CD8-positive, alpha-beta T cell (primary cell): ENCODE measurements at regions of chr4 and their contacts with region 1.

Region 1: DNA sequence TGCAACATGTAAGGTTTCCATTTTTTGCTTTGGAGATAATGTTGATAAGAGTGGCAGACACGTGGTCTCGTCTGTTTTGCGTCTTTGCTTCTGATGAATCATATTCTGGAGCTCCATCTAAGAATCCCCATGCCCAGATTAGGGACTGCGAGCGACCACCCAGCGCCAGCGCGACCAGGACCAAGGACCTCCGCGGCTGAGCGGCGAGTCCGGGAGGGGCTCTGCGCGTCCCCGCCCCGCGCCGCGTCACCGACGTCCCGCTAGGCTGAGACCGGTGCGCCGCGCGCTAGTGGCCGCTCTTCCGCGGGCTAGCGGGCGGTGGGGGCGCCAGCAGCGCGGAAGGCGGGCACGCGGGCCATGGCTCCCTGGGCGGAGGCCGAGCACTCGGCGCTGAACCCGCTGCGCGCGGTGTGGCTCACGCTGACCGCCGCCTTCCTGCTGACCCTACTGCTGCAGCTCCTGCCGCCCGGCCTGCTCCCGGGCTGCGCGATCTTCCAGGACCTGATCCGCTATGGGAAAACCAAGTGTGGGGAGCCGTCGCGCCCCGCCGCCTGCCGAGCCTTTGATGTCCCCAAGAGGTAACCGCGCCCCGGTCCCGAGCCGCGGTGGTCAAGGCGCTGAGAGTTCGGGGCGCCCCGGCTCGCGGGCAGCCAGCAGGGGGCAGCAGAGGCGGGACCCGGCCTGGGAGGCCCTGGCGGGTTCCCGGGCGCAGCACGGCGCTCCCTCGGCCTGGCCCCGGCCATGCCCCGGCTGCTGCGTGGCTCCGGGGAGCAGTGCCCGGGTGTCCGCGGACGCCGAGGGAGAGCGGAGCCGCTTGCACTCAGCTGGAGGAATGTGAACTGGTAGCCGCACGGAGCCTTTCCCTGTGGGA is at the start of gene SRD5A3:
- DNase-seq: peak; percentile 57 to 89 (median 81)
- ATAC-seq: peak; percentile 85
- H3K4me3 ChIP-seq: peak within 1 kb of the TSS; percentile 68 to 88
- H3K4me3 Mint-ChIP-seq: peak within 1 kb of the TSS; percentile 86
- H3K27ac ChIP-seq: peak within 1 kb of the TSS; percentile 64 to 81
- H3K27ac Mint-ChIP-seq: peak within 1 kb of the TSS; percentile 85
- H3K4me1 ChIP-seq: peaks cover 9% of the 10 kb centered on the region
- H3K4me1 Mint-ChIP-seq: peaks cover 14% of the 10 kb centered on the region
- H3K27me3 ChIP-seq: no peaks in the 10 kb centered on the region
- H3K27me3 Mint-ChIP-seq: no peaks in the 10 kb centered on the region
- CTCF ChIP-seq: peak; percentile 97
- total RNA-seq, gene SRD5A3: 1.1 TPM

Region 2: DNA sequence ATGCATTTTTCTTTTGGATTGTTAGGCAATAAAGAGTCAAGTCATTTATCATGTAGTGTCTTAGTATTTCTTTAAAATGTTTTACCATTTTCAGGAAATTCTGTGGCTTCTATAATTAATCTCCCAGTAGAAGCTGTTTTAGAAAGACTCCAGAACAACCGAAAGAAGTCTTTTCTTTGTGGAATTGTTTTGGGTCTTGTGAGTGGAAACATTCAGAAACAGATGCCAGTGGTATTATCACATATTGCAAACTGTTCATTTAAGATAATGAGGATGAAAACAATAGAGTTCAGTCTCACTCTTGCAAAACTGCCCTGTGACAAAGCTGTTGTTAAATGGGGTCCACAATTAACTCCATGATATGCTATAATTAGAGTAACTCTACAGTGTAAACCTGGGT is 899.6 kb before region 1 on chr4:
- CTCF ChIA-PET with region 1: no interaction called
- POLR2A ChIA-PET with region 1: no interaction called
- intact Hi-C with region 1: no loop called
- DNase-seq: no peak
- ATAC-seq: no peak
- H3K4me3 ChIP-seq: no peak overlapping the region
- H3K4me3 Mint-ChIP-seq: no peak overlapping the region
- H3K27ac ChIP-seq: no peak overlapping the region
- H3K27ac Mint-ChIP-seq: no peak overlapping the region
- H3K4me1 ChIP-seq: no peaks in the 10 kb centered on the region
- H3K4me1 Mint-ChIP-seq: no peaks in the 10 kb centered on the region
- H3K27me3 ChIP-seq: no peaks in the 10 kb centered on the region
- H3K27me3 Mint-ChIP-seq: peaks cover 12% of the 10 kb centered on the region
- CTCF ChIP-seq: no peak

Region 3: GRCh38 chr4:54539500-54540029 is 806.6 kb before region 1 on chr4:
- CTCF ChIA-PET with region 1: no interaction called
- POLR2A ChIA-PET with region 1: no interaction called
- intact Hi-C with region 1: no loop called
- DNase-seq: no peak
- ATAC-seq: no peak
- H3K4me3 ChIP-seq: no peak overlapping the region
- H3K4me3 Mint-ChIP-seq: peak overlapping the region; percentile 39
- H3K27ac ChIP-seq: no peak overlapping the region
- H3K27ac Mint-ChIP-seq: no peak overlapping the region
- H3K4me1 ChIP-seq: no peaks in the 10 kb centered on the region
- H3K4me1 Mint-ChIP-seq: peaks cover 3% of the 10 kb centered on the region
- H3K27me3 ChIP-seq: no peaks in the 10 kb centered on the region
- H3K27me3 Mint-ChIP-seq: peaks cover 27% of the 10 kb centered on the region
- CTCF ChIP-seq: no peak

Region 4: DNA sequence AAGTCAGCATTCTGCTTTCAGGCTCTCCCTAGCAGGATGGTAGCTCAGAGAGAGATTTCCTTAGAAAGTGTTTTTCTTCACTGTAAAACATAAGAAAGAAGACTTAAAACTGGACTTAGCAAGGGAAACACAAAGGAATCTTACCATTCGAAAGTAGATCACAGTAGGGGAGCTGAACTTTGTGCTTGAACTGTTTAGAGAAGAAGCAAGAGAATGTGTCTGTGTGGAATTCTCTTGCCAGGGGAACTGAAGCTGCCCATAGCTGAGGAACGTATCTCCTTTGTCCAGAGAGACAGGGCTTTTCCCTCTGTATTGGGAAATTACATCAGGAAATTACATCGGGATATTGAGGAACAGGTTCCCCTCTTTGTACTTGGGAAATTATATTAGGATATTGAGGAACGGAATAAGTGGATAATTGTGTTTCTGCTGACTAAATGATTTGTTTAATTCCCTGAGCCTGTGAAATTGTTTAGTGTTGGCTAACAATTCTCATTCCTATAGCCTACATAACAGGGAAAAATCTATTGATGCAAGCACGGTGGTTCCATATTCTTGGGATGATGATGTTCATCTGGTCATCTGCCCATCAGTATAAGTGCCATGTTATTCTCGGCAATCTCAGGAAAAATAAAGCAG is 21.0 kb after region 1 on chr4:
- CTCF ChIA-PET with region 1: interaction called, 18 read pairs
- POLR2A ChIA-PET with region 1: no interaction called
- intact Hi-C with region 1: no loop called
- DNase-seq: no peak
- ATAC-seq: no peak
- H3K4me3 ChIP-seq: no peak overlapping the region
- H3K4me3 Mint-ChIP-seq: no peak overlapping the region
- H3K27ac ChIP-seq: no peak overlapping the region
- H3K27ac Mint-ChIP-seq: no peak overlapping the region
- H3K4me1 ChIP-seq: no peaks in the 10 kb centered on the region
- H3K4me1 Mint-ChIP-seq: no peaks in the 10 kb centered on the region
- H3K27me3 ChIP-seq: no peaks in the 10 kb centered on the region
- H3K27me3 Mint-ChIP-seq: no peaks in the 10 kb centered on the region
- CTCF ChIP-seq: no peak

Region 5: GRCh38 chr4:55435141-55435841 is 89.1 kb after region 1 on chr4:
- CTCF ChIA-PET with region 1: interaction called, 4 read pairs
- POLR2A ChIA-PET with region 1: interaction called, 3 read pairs
- intact Hi-C with region 1: loop called (anchors 5 kb)
- DNase-seq: peak in 3 of 9 experiments; percentile 13 to 26 (median 16)
- ATAC-seq: peak; percentile 36
- H3K4me3 ChIP-seq: no peak overlapping the region
- H3K4me3 Mint-ChIP-seq: no peak overlapping the region
- H3K27ac ChIP-seq: peak overlapping the region in 1 of 2 experiments; percentile 1
- H3K27ac Mint-ChIP-seq: peak overlapping the region; percentile 80
- H3K4me1 ChIP-seq: no peaks in the 10 kb centered on the region
- H3K4me1 Mint-ChIP-seq: peaks cover 14% of the 10 kb centered on the region
- H3K27me3 ChIP-seq: no peaks in the 10 kb centered on the region
- H3K27me3 Mint-ChIP-seq: no peaks in the 10 kb centered on the region
- CTCF ChIP-seq: no peak

Region 6: GRCh38 chr4:55736605-55737183 is 390.5 kb after region 1 on chr4:
- CTCF ChIA-PET with region 1: interaction called, 4 read pairs
- POLR2A ChIA-PET with region 1: no interaction called
- intact Hi-C with region 1: loop called (anchors 5 to 10 kb)
- DNase-seq: peak in 2 of 9 experiments; percentile 5 to 13
- ATAC-seq: no peak
- H3K4me3 ChIP-seq: no peak overlapping the region
- H3K4me3 Mint-ChIP-seq: no peak overlapping the region
- H3K27ac ChIP-seq: no peak overlapping the region
- H3K27ac Mint-ChIP-seq: no peak overlapping the region
- H3K4me1 ChIP-seq: no peaks in the 10 kb centered on the region
- H3K4me1 Mint-ChIP-seq: no peaks in the 10 kb centered on the region
- H3K27me3 ChIP-seq: peaks cover 0 to 3% of the 10 kb centered on the region in 2 experiments
- H3K27me3 Mint-ChIP-seq: peaks cover 50% of the 10 kb centered on the region
- CTCF ChIP-seq: no peak